ENCODE measurements at regions of chr1 and their contacts with region 1.

Region 1: DNA sequence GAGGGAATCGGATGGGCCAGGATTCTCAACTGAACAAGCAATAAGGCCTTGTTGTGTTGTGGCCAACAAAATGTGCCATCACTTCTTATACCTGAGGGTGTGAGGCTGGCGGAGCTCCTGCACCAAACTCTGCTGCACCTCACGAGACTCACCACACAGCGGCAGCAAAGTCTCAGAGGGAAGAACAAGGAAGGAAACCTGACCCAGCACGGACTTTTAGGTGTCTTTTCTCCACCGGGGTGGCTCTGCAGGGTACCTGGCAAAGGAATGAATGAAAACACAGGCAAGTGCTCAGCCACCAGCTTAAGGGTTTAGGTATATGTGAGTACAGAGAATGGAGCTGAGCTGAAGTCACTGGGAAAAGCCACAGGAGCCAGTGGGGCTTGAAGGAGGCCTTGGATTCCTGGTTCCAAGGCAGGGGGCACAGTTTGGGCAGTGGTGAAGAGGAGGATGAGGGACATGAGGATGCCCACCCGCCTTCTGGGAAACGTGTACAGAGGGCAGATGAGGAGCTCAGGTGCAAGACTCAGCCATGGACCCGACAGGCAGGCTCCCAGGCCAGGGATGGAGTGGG is 31.1 kb upstream of the HSD3B1 start:
- DNase-seq: peak; percentile 46
- ATAC-seq: peak; percentile 96
- H3K4me3 ChIP-seq: peak overlapping the region in 1 of 3 experiments; percentile 6; a peak in 1 of 6 replicates
- H3K27ac ChIP-seq: no peak overlapping the region
- H3K4me1 ChIP-seq: 0 out of 2 replicates have a peak, but pooled peaks cover 5% of the 10 kb centered on the region
- H3K27me3 ChIP-seq: 0 out of 5 replicates have a peak, but pooled peaks cover 0 to 3% of the 10 kb centered on the region in 2 experiments
- CTCF ChIP-seq: peak; percentile 81
- EP300 ChIP-seq: no peak
- POLR2A ChIP-seq: no peak
- RAD21 ChIP-seq: 0 out of 2 replicates have a peak, but pooled peaks have one; percentile 20

Region 2: GRCh38 chr1:119329541-119330461 is 146.2 kb before region 1 on chr1:
- CTCF ChIA-PET with region 1: no interaction called
- POLR2A ChIA-PET with region 1: no interaction called
- in situ Hi-C with region 1: no loop called
- intact Hi-C with region 1: no loop called
- DNase-seq: no peak
- ATAC-seq: no peak
- H3K4me3 ChIP-seq: no peak overlapping the region
- H3K27ac ChIP-seq: no peak overlapping the region
- H3K4me1 ChIP-seq: peaks cover 35% of the 10 kb centered on the region
- H3K27me3 ChIP-seq: no peaks in the 10 kb centered on the region
- CTCF ChIP-seq: no peak
- EP300 ChIP-seq: no peak
- POLR2A ChIP-seq: no peak
- RAD21 ChIP-seq: no peak

Region 3: GRCh38 chr1:119372490-119373086 is 103.4 kb before region 1 on chr1:
- CTCF ChIA-PET with region 1: interaction called, 3 read pairs
- POLR2A ChIA-PET with region 1: no interaction called
- in situ Hi-C with region 1: no loop called
- intact Hi-C with region 1: loop called (anchors 1 kb)
- DNase-seq: peak; percentile 70
- ATAC-seq: peak; percentile 88
- H3K4me3 ChIP-seq: no peak overlapping the region
- H3K27ac ChIP-seq: no peak overlapping the region
- H3K4me1 ChIP-seq: peaks cover 30% of the 10 kb centered on the region
- H3K27me3 ChIP-seq: no peaks in the 10 kb centered on the region
- CTCF ChIP-seq: peak; percentile 72
- EP300 ChIP-seq: no peak
- POLR2A ChIP-seq: no peak
- RAD21 ChIP-seq: no peak; the same call in 1 of the 2 replicates

Measured in HepG2 (cell line).